AG04450 (cell line): ENCODE measurements at regions of chr11 and their contacts with region 1.

Region 1: DNA sequence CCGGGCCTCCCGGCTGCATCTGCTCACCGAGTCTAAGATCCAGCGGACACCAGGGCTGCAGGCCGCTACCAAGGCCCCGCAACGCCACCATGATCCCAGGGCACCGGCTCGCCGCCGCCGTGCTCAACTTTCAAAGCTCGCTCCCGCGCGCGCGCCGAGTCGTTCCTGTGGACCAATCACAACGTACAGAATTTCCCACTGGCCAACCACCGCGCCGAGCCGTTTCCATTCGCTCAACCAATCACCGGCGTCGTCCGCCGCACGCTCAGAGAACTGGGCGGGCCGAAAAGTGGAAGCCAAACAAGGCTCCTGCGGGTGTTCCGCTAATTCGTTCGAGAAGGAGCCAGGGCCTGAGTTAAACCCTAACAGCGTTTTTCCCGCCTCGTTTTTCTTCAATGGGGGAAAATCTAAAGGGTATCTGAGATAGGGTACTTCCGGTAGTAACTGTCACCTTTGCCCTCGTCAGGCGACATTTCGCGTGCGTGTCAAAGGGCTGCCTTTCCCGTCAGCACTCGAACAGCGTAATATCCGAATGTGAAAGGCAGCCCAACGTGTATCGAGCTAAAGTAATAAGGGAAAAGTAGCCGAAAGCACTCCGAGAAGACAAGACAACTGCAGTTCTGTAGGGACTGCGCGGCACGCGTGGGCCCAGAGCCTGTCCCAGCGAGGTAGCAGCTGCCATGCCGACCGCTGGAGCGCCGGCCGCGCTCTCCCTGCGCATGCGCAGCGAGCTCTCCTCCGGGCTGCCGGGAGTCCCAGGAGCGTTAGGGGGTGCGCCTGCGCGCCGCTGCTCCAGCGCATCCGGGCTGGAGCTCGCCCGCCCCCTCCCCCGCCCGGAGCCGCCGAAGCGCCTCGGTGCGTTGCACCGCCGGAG is at the starts of genes NCAPD3 and VPS26B:
- DNase-seq: peak; percentile 90
- H3K4me3 ChIP-seq: peak within 1 kb of the TSS; percentile 86
- H3K27ac ChIP-seq: peak within 1 kb of the TSS; percentile 88
- H3K27me3 ChIP-seq: no peaks in the 10 kb centered on the region
- CTCF ChIP-seq: no peak; the same call in 1 of the 2 replicates
- polyA plus RNA-seq, gene NCAPD3: 10.2 and 12.2 TPM in 2 replicates
- polyA plus RNA-seq, gene VPS26B: 49.9 and 53.7 TPM in 2 replicates

Region 2: GRCh38 chr11:134244655-134245054 is 20.6 kb after region 1 on chr11:
- CTCF ChIA-PET with region 1: interaction called, 11 read pairs
- POLR2A ChIA-PET with region 1: interaction called, 7 read pairs
- DNase-seq: no peak
- H3K4me3 ChIP-seq: no peak overlapping the region
- H3K27ac ChIP-seq: no peak overlapping the region
- H3K27me3 ChIP-seq: no peaks in the 10 kb centered on the region
- CTCF ChIP-seq: peak; percentile 46

Region 3: GRCh38 chr11:134253188-134253993 is 29.3 kb after region 1 on chr11 and contains the starts of genes ACAD8 and THYN1:
- CTCF ChIA-PET with region 1: interaction called, 9 read pairs
- POLR2A ChIA-PET with region 1: interaction called, 14 read pairs
- DNase-seq: peak; percentile 92
- H3K4me3 ChIP-seq: peak within 1 kb of the TSS; percentile 88
- H3K27ac ChIP-seq: peak within 1 kb of the TSS; percentile 57
- H3K27me3 ChIP-seq: no peaks in the 10 kb centered on the region
- CTCF ChIP-seq: peak; percentile 26; the same call in 1 of the 2 replicates
- polyA plus RNA-seq, gene ACAD8: 22.1 and 24.7 TPM in 2 replicates
- polyA plus RNA-seq, gene THYN1: 73.3 and 80.8 TPM in 2 replicates